Naive thymus-derived CD4-positive, alpha-beta T cell (primary cell): ENCODE measurements at regions of chr2 and their contacts with region 1.

Region 1: DNA sequence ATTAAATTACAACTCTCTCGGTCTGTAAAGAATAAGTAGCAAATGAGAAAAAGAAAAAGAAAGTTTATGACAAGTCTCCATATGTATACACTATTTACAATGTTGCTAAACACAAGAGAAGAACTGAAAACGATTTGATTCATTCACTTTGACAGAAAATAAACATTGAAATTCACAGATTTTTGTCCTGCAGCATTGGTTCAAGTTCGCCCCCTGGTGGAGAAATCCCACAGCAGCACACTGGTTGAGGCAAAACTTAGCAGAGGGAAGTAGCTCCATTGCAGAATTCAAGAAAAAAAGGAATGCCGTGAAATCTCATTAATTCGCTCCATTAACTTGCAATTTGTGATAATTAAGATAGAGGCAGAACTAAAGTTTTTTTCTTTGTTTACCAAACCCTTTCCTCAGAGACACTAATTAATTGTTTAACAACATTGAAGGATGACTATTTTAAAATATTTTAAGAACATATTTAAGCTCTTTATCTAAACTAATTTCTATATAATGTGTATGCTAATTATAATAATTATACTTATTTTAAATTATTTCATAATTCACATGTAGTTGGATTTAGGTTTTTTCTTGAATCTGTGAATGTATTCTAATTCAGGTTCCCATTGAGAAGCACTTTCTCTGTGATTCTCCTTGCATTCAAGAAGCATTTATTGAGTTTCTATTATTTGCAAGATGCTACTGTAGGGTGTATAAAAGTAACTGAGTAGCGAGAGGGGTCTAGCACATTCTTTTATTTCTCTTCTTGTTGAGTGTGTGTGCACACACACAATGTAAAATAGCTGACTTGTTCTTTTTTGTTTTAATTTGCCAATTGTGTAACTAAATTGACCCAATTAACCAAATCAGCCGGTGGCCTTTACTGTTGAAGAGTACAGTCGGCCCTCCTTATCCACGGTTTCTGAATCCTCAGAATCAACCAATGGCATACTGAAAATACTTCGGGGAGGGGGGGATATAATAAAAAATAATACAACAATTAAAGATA is 74.1 kb downstream of the COL4A3 start:
- DNase-seq: peak; percentile 2 to 58 (median 41)
- ATAC-seq: peak; percentile 47
- H3K4me3 ChIP-seq: no peak overlapping the region
- H3K4me3 Mint-ChIP-seq: no peak overlapping the region
- H3K27ac ChIP-seq: no peak overlapping the region
- H3K27ac Mint-ChIP-seq: no peak overlapping the region
- H3K4me1 ChIP-seq: no peaks in the 10 kb centered on the region
- H3K4me1 Mint-ChIP-seq: no peaks in the 10 kb centered on the region
- H3K27me3 ChIP-seq: no peaks in the 10 kb centered on the region
- H3K27me3 Mint-ChIP-seq: peaks cover 5 to 16% (median 13%) of the 10 kb centered on the region in 5 donors

Region 2: GRCh38 chr2:226813148-226813701 is 425.3 kb before region 1 on chr2:
- CTCF ChIA-PET with region 1: no interaction called
- POLR2A ChIA-PET with region 1: no interaction called
- intact Hi-C with region 1: loop called in 1 of 2 experiments (anchors 10 kb)
- DNase-seq: no peak
- ATAC-seq: no peak
- H3K4me3 ChIP-seq: no peak overlapping the region
- H3K4me3 Mint-ChIP-seq: no peak overlapping the region
- H3K27ac ChIP-seq: no peak overlapping the region
- H3K27ac Mint-ChIP-seq: no peak overlapping the region
- H3K4me1 ChIP-seq: no peaks in the 10 kb centered on the region
- H3K4me1 Mint-ChIP-seq: no peaks in the 10 kb centered on the region
- H3K27me3 ChIP-seq: no peaks in the 10 kb centered on the region
- H3K27me3 Mint-ChIP-seq: peaks cover 21 to 46% (median 42%) of the 10 kb centered on the region in 5 donors

Region 3: GRCh38 chr2:227130636-227131035 is 107.9 kb before region 1 on chr2:
- CTCF ChIA-PET with region 1: no interaction called
- POLR2A ChIA-PET with region 1: no interaction called
- intact Hi-C with region 1: loop called in 1 of 2 experiments (anchors 1 kb)
- DNase-seq: no peak
- ATAC-seq: no peak
- H3K4me3 ChIP-seq: no peak overlapping the region
- H3K4me3 Mint-ChIP-seq: no peak overlapping the region
- H3K27ac ChIP-seq: no peak overlapping the region
- H3K27ac Mint-ChIP-seq: no peak overlapping the region
- H3K4me1 ChIP-seq: no peaks in the 10 kb centered on the region
- H3K4me1 Mint-ChIP-seq: no peaks in the 10 kb centered on the region
- H3K27me3 ChIP-seq: no peaks in the 10 kb centered on the region
- H3K27me3 Mint-ChIP-seq: peaks cover 6 to 35% (median 15%) of the 10 kb centered on the region in 5 donors

Region 4: DNA sequence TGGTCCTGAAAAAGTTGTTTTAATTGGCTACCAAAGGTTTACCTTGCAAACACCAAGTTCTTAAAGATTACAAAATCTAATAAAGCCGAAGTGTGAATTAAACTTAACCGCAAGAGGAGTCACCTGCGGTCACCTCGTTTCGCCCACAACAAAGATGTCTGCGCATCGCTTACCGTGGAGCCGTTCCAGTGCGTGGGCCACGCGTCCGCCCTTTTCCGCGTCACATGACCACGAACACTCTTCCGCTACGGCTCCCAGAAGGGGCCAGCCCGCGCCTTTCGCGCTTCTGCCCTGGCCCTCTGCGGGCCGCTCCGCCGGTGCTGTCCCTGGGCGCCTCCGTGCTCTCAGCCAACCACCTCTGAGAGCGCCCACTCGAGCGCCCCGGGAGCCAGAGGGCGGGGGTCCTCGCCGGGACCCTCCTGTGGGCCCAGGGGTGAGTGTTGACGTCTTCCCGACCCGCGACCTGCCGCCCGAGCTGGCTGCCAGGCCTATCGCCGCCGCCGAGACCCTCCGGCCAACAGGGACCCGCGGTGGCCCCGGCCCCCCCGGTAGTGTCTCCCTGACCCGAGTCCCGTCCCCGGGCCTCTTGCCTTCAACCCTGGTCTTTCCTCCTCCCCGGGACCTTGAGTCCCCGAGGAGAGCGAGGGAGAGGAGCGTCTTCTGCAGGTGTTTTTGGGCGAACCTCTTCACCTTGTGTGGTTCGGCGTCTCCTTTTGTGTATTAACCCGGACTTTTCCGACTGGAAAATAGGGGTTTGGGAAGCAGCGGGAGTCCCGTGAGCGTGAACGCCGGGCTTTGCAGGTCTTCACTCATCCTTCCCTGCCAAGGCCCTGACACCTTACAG is 86.7 kb after region 1 on chr2 and contains the start of gene MFF:
- CTCF ChIA-PET with region 1: no interaction called
- POLR2A ChIA-PET with region 1: no interaction called
- intact Hi-C with region 1: loop called in 1 of 2 experiments (anchors 1 kb)
- DNase-seq: peak; percentile 82 to 93 (median 93)
- ATAC-seq: peak; percentile 99
- H3K4me3 ChIP-seq: peak within 1 kb of the TSS; percentile 76
- H3K4me3 Mint-ChIP-seq: peak within 1 kb of the TSS; percentile 91 to 97 (median 96)
- H3K27ac ChIP-seq: peak within 1 kb of the TSS; percentile 92
- H3K27ac Mint-ChIP-seq: peak within 1 kb of the TSS; percentile 83 to 97 (median 95)
- H3K4me1 ChIP-seq: peaks cover 4 to 24% of the 10 kb centered on the region in 2 donors
- H3K4me1 Mint-ChIP-seq: peaks cover 8 to 59% (median 46%) of the 10 kb centered on the region in 7 donors
- H3K27me3 ChIP-seq: no peaks in the 10 kb centered on the region
- H3K27me3 Mint-ChIP-seq: peaks cover 0 to 13% (median 0%) of the 10 kb centered on the region in 5 donors
- total RNA-seq, gene MFF: 51.7 to 64.7 (median 61.8) TPM

Region 5: GRCh38 chr2:227908261-227909054 is 669.9 kb after region 1 on chr2:
- CTCF ChIA-PET with region 1: no interaction called
- POLR2A ChIA-PET with region 1: no interaction called
- intact Hi-C with region 1: no loop called
- DNase-seq: no peak
- ATAC-seq: no peak
- H3K4me3 ChIP-seq: no peak overlapping the region
- H3K4me3 Mint-ChIP-seq: no peak overlapping the region
- H3K27ac ChIP-seq: no peak overlapping the region
- H3K27ac Mint-ChIP-seq: no peak overlapping the region
- H3K4me1 ChIP-seq: no peaks in the 10 kb centered on the region
- H3K4me1 Mint-ChIP-seq: no peaks in the 10 kb centered on the region
- H3K27me3 ChIP-seq: no peaks in the 10 kb centered on the region
- H3K27me3 Mint-ChIP-seq: peaks cover 0 to 8% (median 0%) of the 10 kb centered on the region in 5 donors